GM10248 (cell line): ENCODE measurements at regions of chr3 and their contacts with region 1.

Region 1: GRCh38 chr3:8506571-8507061 is 5.0 kb downstream of the LMCD1 start:
- DNase-seq: no peak
- CTCF ChIP-seq: no peak

Region 2: GRCh38 chr3:8307545-8308110 is 199.0 kb before region 1 on chr3:
- CTCF ChIA-PET with region 1: no interaction called
- POLR2A ChIA-PET with region 1: no interaction called
- DNase-seq: no peak
- CTCF ChIP-seq: no peak

Region 3: GRCh38 chr3:8341821-8342247 is 164.8 kb before region 1 on chr3:
- CTCF ChIA-PET with region 1: no interaction called
- POLR2A ChIA-PET with region 1: no interaction called
- DNase-seq: no peak
- CTCF ChIP-seq: no peak

Region 4: GRCh38 chr3:8443829-8444791 is 62.5 kb before region 1 on chr3:
- CTCF ChIA-PET with region 1: no interaction called
- POLR2A ChIA-PET with region 1: no interaction called
- DNase-seq: no peak
- CTCF ChIP-seq: no peak

Region 5: GRCh38 chr3:8519156-8519555 is 12.5 kb after region 1 on chr3:
- CTCF ChIA-PET with region 1: interaction called, 10 read pairs
- POLR2A ChIA-PET with region 1: no interaction called
- DNase-seq: no peak
- CTCF ChIP-seq: no peak

Region 6: GRCh38 chr3:8595695-8596115 is 89.1 kb after region 1 on chr3:
- CTCF ChIA-PET with region 1: no interaction called
- POLR2A ChIA-PET with region 1: no interaction called
- DNase-seq: no peak
- CTCF ChIP-seq: no peak